Mammary epithelial cell (primary cell): ENCODE measurements at regions of chr1 and their contacts with region 1.

Region 1: GRCh38 chr1:65419681-65420589 is 533 bp upstream of the LEPR start:
- DNase-seq: peak; percentile 96
- H3K4me3 ChIP-seq: peak overlapping the region; percentile 46 to 50 (median 49)
- H3K27ac ChIP-seq: peak overlapping the region; percentile 75
- H3K4me1 ChIP-seq: peaks cover 58% of the 10 kb centered on the region
- H3K27me3 ChIP-seq: no peaks in the 10 kb centered on the region
- CTCF ChIP-seq: no peak

Region 2: DNA sequence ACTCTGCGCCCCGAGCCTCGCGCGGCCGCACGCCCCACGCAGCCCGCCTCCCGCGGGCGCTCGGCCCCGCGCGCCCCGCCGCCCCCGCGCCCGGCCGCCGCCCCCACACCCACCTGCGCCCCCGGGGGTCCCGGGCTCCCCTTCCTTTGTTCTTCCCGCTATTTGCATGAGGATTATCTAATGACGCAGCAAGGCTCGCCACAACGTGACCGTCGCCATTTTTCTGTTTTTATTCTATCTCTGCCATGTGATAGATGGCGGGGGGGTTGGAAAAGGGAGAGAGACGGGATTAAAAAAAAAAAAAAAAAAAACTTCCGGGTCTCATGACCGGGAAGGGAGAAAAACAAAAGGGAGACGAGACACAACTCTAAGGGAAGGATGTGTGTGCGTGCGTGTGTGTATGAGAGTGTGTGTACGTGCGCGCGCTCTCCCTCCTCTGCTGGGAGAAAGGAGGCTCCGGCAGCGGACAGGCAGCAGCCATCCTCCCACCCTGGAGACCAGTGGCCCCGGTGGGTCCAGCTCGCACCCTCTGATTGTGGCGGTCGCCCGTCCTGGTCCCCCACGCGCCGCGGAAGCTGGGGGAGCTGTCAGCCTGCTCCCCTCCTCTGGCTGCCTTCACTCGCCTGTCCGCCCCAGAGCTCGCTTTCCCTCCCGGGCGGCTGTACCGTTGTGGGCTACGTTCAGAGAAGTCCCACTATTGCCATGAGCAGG is 352.3 kb before region 1 on chr1:
- CTCF ChIA-PET with region 1: no interaction called
- dilution Hi-C with region 1: no loop called
- in situ Hi-C with region 1: loop called in 1 of 2 experiments (anchors 25 kb)
- intact Hi-C with region 1: loop called (anchors 5 kb)
- DNase-seq: peak; percentile 71
- H3K4me3 ChIP-seq: peak overlapping the region; percentile 65 to 80 (median 75)
- H3K27ac ChIP-seq: peak overlapping the region; percentile 18
- H3K4me1 ChIP-seq: peaks cover 14% of the 10 kb centered on the region
- H3K27me3 ChIP-seq: no peaks in the 10 kb centered on the region
- CTCF ChIP-seq: no peak

Region 3: DNA sequence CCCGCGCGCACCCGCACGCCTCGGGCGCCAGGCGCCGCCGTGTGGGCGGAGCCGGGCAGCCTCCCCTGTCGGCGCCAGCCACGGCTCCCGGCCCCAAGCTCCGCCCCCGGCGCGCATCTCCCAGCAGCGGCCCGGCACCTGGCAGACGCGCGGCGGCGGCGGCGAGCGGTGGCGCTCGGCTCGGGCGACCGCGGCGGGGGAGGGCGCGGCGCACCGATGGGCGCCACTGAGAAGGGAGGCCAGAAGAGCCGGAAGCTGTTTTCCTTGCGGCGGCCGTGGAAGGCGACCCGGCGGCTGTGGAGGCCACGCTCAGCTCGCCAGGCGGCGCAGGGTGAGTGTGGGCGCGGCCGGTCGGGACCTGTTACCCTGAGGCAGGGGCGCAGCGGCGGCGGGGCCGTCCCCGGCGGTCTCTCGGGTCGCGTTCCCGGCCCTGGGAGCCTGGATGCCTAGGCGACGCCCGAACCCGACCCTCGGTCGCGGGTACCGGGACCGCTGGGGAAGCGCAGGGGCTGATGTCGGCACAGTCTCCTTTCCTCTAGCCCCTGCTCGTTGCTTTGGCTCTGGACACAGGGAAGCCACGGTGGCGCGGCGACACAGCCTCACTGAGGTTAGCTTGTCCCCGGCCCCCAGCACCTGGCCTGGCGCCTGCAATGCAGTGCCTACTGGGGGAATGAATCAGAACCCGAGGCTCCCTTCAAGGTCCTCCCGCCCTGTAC is 165.5 kb before region 1 on chr1:
- CTCF ChIA-PET with region 1: no interaction called
- dilution Hi-C with region 1: no loop called
- in situ Hi-C with region 1: no loop called
- intact Hi-C with region 1: loop called (anchors 2 kb)
- DNase-seq: peak; percentile 68
- H3K4me3 ChIP-seq: peak overlapping the region; percentile 64 to 87 (median 78)
- H3K27ac ChIP-seq: peak overlapping the region; percentile 37
- H3K4me1 ChIP-seq: peaks cover 19% of the 10 kb centered on the region
- H3K27me3 ChIP-seq: no peaks in the 10 kb centered on the region
- CTCF ChIP-seq: no peak

Region 4: DNA sequence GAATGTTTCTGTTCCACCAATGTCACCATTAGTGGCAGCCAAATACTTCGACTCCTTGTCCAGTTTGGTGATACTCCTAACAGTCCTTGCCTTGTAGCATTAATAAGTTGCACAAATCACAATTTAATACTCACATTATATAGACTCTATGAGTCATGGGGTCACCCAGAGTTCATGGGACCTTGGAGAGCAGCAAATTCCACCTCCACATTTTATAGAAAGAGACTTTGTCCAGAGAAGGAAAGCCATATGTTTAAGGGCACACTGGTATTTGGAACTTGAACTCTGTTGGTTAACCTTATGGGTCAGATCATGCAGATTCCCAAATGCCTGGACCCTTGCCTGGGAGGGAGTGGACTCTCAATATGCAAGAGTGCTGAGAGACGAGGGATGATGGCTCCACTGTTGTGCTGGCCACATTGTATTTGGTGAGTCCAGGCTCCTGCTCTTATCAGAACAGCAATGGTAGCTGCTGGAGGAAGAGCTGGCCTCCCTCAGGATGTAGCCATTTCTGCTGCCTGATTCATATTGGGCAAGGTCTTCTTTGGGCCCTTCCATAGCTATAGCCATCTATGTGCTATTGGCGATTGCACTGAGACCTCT is 80.0 kb before region 1 on chr1:
- CTCF ChIA-PET with region 1: interaction called, 5 read pairs
- dilution Hi-C with region 1: no loop called
- in situ Hi-C with region 1: no loop called
- intact Hi-C with region 1: loop called (anchors 2 kb)
- DNase-seq: peak; percentile 42
- H3K4me3 ChIP-seq: no peak overlapping the region
- H3K27ac ChIP-seq: no peak overlapping the region
- H3K4me1 ChIP-seq: peaks cover 30% of the 10 kb centered on the region
- H3K27me3 ChIP-seq: no peaks in the 10 kb centered on the region
- CTCF ChIP-seq: no peak

Region 5: GRCh38 chr1:65539266-65540131 is 119.6 kb after region 1 on chr1:
- CTCF ChIA-PET with region 1: no interaction called
- dilution Hi-C with region 1: no loop called
- in situ Hi-C with region 1: no loop called
- intact Hi-C with region 1: no loop called
- DNase-seq: no peak
- H3K4me3 ChIP-seq: no peak overlapping the region
- H3K27ac ChIP-seq: no peak overlapping the region
- H3K4me1 ChIP-seq: no peaks in the 10 kb centered on the region
- H3K27me3 ChIP-seq: no peaks in the 10 kb centered on the region
- CTCF ChIP-seq: no peak

Region 6: DNA sequence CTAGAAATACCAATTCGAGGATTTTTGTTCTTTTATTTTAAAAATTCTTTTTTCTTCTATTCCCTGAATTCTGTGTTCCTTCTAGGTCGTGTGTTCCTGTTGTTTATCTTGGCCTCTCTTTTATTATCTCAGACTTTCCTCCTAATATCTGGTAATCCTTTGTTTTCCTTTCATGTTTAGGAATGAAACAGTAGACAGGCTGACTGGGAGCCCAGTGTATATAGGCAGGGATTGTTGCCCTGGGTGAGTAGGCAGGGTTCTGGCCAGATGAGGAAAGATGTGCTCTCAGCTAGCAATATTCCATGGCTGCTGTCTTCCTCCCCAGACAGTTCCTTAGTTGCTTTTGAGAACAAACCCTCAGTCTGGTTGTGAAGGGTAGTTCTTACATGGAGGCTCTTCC is 210.9 kb after region 1 on chr1:
- CTCF ChIA-PET with region 1: no interaction called
- dilution Hi-C with region 1: no loop called
- in situ Hi-C with region 1: no loop called
- intact Hi-C with region 1: no loop called
- DNase-seq: no peak
- H3K4me3 ChIP-seq: no peak overlapping the region
- H3K27ac ChIP-seq: no peak overlapping the region
- H3K4me1 ChIP-seq: no peaks in the 10 kb centered on the region
- H3K27me3 ChIP-seq: peaks cover 4% of the 10 kb centered on the region
- CTCF ChIP-seq: no peak